ENCODE measurements at regions of chr16 and their contacts with region 1.

Region 1: GRCh38 chr16:19907161-19907992 is 22.7 kb upstream of the GPRC5B start:
- DNase-seq: peak; percentile 76 to 93
- H3K4me3 ChIP-seq: no peak overlapping the region
- H3K27ac ChIP-seq: no peak overlapping the region
- H3K4me1 ChIP-seq: peaks cover 0 to 3% (median 1%) of the 10 kb centered on the region in 4 experiments; a peak in 1 of 7 replicates
- H3K27me3 ChIP-seq: no peaks in the 10 kb centered on the region
- CTCF ChIP-seq: peak; percentile 96 to 99 (median 98)
- EP300 ChIP-seq: 0 out of 3 replicates have a peak, but pooled peaks of 1 of the 2 experiments have one; percentile 25
- POLR2A ChIP-seq: no peak
- RAD21 ChIP-seq: peak; percentile 99 to 100

Region 2: GRCh38 chr16:19717771-19718602 is 189.4 kb before region 1 on chr16 and contains the starts of genes IQCK and KNOP1:
- CTCF ChIA-PET with region 1: no interaction called
- POLR2A ChIA-PET with region 1: no interaction called
- DNase-seq: peak; percentile 78 to 88
- H3K4me3 ChIP-seq: peak within 1 kb of the TSS; percentile 96 to 99 (median 97)
- H3K27ac ChIP-seq: peak within 1 kb of the TSS; percentile 94
- H3K4me1 ChIP-seq: peaks cover 0 to 13% (median 5%) of the 10 kb centered on the region in 4 experiments; a peak in 5 of 7 replicates
- H3K27me3 ChIP-seq: no peaks in the 10 kb centered on the region
- CTCF ChIP-seq: no peak
- EP300 ChIP-seq: no peak
- POLR2A ChIP-seq: peak; percentile 49 to 79
- RAD21 ChIP-seq: peak in 1 of 2 experiments; percentile 0; a peak in 1 of 4 replicates
- total RNA-seq, gene IQCK: 5.8 and 6.2 TPM in 2 replicates
- total RNA-seq, gene KNOP1: 80.8 and 87.9 TPM in 2 replicates

Region 3: DNA sequence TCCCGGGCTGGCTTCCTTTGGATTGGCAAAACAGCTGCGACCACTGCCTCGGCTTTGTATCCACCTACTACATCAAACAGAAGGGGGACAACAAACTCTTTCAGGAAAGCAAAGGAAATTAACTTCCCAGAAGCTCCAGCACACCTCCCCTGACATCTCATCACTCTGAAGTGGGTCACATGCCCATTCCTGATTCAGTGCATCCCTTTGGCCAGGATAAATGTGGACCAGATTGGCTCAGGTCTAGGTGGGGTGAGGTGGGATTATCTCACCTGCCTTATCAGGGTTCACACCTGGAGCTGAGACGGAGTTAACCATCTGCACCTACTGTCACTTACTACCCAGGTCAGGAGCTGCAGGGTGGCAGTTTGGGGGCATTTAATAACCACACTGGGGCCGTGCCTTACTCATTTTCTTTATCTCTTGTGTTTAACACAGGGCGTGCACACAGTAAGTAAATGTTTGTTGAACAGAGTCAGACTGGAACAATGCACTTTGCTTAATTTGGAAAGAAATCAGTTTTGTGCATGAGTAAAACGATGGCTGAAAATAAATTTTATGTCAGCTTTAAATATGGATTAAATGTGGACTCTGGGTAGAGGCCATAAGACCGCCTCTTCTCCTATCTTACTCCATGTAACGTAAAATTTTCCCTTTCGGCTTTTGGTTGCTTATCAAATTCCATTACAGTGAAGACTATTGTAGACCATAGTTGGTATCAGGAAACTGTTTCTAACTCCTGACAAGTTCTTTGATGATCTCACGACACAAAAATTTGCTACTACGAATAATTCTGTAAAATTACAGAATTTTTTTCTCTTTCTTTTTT is 153.3 kb before region 1 on chr16:
- CTCF ChIA-PET with region 1: no interaction called
- POLR2A ChIA-PET with region 1: no interaction called
- DNase-seq: no peak
- H3K4me3 ChIP-seq: no peak overlapping the region
- H3K27ac ChIP-seq: no peak overlapping the region
- H3K4me1 ChIP-seq: no peaks in the 10 kb centered on the region
- H3K27me3 ChIP-seq: no peaks in the 10 kb centered on the region
- CTCF ChIP-seq: no peak
- EP300 ChIP-seq: no peak
- POLR2A ChIP-seq: no peak
- RAD21 ChIP-seq: no peak

Region 4: GRCh38 chr16:19822533-19822932 is 84.8 kb before region 1 on chr16:
- CTCF ChIA-PET with region 1: no interaction called
- POLR2A ChIA-PET with region 1: no interaction called
- DNase-seq: no peak
- H3K4me3 ChIP-seq: no peak overlapping the region
- H3K27ac ChIP-seq: no peak overlapping the region
- H3K4me1 ChIP-seq: no peaks in the 10 kb centered on the region
- H3K27me3 ChIP-seq: no peaks in the 10 kb centered on the region
- CTCF ChIP-seq: no peak
- EP300 ChIP-seq: no peak
- POLR2A ChIP-seq: no peak
- RAD21 ChIP-seq: no peak

Region 5: GRCh38 chr16:19940195-19940594 is 32.8 kb after region 1 on chr16:
- CTCF ChIA-PET with region 1: interaction called, 11 read pairs
- POLR2A ChIA-PET with region 1: no interaction called
- DNase-seq: no peak
- H3K4me3 ChIP-seq: no peak overlapping the region
- H3K27ac ChIP-seq: no peak overlapping the region
- H3K4me1 ChIP-seq: peaks cover 0 to 3% (median 2%) of the 10 kb centered on the region in 4 experiments; a peak in 2 of 7 replicates
- H3K27me3 ChIP-seq: no peaks in the 10 kb centered on the region
- CTCF ChIP-seq: no peak
- EP300 ChIP-seq: no peak
- POLR2A ChIP-seq: no peak
- RAD21 ChIP-seq: no peak

Region 6: GRCh38 chr16:20004932-20005331 is 97.6 kb after region 1 on chr16:
- CTCF ChIA-PET with region 1: interaction called, 13 read pairs
- POLR2A ChIA-PET with region 1: interaction called, 7 read pairs
- DNase-seq: peak in 1 of 2 experiments; percentile 36
- H3K4me3 ChIP-seq: no peak overlapping the region
- H3K27ac ChIP-seq: no peak overlapping the region
- H3K4me1 ChIP-seq: peaks cover 0 to 5% (median 2%) of the 10 kb centered on the region in 4 experiments; a peak in 4 of 7 replicates
- H3K27me3 ChIP-seq: no peaks in the 10 kb centered on the region
- CTCF ChIP-seq: peak; percentile 29 to 73 (median 60)
- EP300 ChIP-seq: no peak
- POLR2A ChIP-seq: no peak
- RAD21 ChIP-seq: peak; percentile 44 to 69; a peak in 3 of 4 replicates

Region 7: DNA sequence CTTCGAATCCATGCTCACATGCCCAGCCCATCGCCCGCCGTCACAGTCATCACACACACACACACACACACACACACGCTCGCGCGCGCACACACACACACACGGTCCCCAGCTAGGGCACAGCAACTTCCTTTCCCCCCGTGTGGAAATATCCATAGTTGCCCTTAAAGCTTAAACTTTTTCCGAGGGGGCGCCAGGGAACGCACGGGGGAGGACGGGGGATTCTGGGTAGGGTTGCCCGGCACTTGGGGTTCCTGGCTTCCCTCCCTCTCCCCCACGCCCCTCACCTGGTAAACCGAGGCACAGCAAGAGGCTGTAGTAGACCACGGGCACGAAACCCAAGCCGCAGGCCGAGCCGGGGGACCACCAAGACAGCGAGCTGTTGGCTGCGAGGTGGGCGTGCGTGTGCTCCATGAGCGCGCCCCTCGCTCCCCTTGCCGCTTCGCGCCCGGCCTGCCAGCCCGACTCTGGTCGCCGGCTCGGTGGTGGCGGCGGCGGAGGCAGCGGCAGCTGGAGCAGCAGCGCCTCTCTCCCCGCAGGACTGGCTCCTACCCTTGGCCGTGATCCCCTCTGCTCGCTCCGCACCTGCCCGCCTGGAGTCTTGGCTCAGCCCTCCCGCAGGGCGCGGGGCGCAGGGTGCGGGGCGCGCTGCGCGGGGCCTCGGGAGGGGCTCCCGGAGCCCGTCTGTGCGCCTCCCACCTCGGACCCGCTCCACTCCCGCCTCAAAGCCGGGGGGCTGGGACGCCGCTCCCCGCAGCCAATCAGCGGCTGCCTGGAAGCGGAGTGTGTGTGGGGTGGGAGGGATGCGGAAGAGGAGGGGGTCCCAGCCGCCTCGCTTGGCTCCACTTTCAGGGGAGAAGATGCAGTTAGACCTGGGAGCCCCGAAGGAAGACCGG is 166.1 kb after region 1 on chr16 and contains the start of gene GPR139:
- CTCF ChIA-PET with region 1: interaction called, 10 read pairs
- POLR2A ChIA-PET with region 1: no interaction called
- DNase-seq: peak in 1 of 2 experiments; percentile 83
- H3K4me3 ChIP-seq: peak within 1 kb of the TSS; percentile 54 to 67 (median 59)
- H3K27ac ChIP-seq: no peak within 1 kb of the TSS
- H3K4me1 ChIP-seq: peaks cover 7 to 23% (median 15%) of the 10 kb centered on the region in 4 experiments
- H3K27me3 ChIP-seq: peaks cover 3 to 37% (median 34%) of the 10 kb centered on the region in 4 experiments
- CTCF ChIP-seq: no peak
- EP300 ChIP-seq: no peak
- POLR2A ChIP-seq: no peak
- RAD21 ChIP-seq: no peak; a peak in 1 of 4 replicates
- total RNA-seq, gene GPR139: 0.73 and 0.84 TPM in 2 replicates

Region 8: GRCh38 chr16:20300312-20301097 is 393.1 kb after region 1 on chr16:
- CTCF ChIA-PET with region 1: interaction called, 139 read pairs
- POLR2A ChIA-PET with region 1: no interaction called
- DNase-seq: peak; percentile 47 to 72
- H3K4me3 ChIP-seq: no peak overlapping the region
- H3K27ac ChIP-seq: no peak overlapping the region
- H3K4me1 ChIP-seq: no peaks in the 10 kb centered on the region; a peak in 1 of 7 replicates
- H3K27me3 ChIP-seq: no peaks in the 10 kb centered on the region
- CTCF ChIP-seq: peak; percentile 74 to 90 (median 88)
- EP300 ChIP-seq: no peak
- POLR2A ChIP-seq: no peak
- RAD21 ChIP-seq: peak; percentile 97 to 99

Region 9: DNA sequence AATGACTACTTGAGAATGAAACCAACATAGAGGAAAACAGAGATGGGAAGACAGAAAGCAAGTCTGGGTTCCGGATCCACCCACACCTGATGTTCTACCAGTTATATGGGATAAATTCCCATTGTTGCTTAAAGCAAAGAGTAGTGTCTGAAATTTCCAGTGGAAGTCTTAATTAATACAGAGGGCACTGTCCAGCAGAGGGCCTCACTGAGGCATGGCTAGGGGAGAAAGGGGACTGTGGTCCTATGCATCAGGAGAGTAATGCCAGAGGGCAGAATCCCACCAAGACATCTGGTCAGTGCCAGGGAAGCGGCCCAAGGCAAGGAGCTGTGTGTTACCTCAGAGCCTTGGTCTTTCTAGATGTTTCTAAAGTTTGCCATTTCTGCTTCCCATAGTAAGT is 452.6 kb after region 1 on chr16:
- CTCF ChIA-PET with region 1: interaction called, 11 read pairs
- POLR2A ChIA-PET with region 1: no interaction called
- DNase-seq: peak in 1 of 2 experiments; percentile 59
- H3K4me3 ChIP-seq: no peak overlapping the region
- H3K27ac ChIP-seq: no peak overlapping the region
- H3K4me1 ChIP-seq: no peaks in the 10 kb centered on the region
- H3K27me3 ChIP-seq: no peaks in the 10 kb centered on the region
- CTCF ChIP-seq: peak; percentile 57 to 71 (median 66)
- EP300 ChIP-seq: no peak
- POLR2A ChIP-seq: no peak
- RAD21 ChIP-seq: peak; percentile 53 to 64

Measured in H1 (cell line).